ENCODE measurements at regions of chr1 and their contacts with region 1.

Region 1: GRCh38 chr1:208007938-208008342 is 97.0 kb upstream of the CD34 start:
- H3K4me3 ChIP-seq: no peak overlapping the region
- H3K27ac ChIP-seq: no peak overlapping the region
- H3K4me1 ChIP-seq: no peaks in the 10 kb centered on the region
- CTCF ChIP-seq: no peak

Region 2: DNA sequence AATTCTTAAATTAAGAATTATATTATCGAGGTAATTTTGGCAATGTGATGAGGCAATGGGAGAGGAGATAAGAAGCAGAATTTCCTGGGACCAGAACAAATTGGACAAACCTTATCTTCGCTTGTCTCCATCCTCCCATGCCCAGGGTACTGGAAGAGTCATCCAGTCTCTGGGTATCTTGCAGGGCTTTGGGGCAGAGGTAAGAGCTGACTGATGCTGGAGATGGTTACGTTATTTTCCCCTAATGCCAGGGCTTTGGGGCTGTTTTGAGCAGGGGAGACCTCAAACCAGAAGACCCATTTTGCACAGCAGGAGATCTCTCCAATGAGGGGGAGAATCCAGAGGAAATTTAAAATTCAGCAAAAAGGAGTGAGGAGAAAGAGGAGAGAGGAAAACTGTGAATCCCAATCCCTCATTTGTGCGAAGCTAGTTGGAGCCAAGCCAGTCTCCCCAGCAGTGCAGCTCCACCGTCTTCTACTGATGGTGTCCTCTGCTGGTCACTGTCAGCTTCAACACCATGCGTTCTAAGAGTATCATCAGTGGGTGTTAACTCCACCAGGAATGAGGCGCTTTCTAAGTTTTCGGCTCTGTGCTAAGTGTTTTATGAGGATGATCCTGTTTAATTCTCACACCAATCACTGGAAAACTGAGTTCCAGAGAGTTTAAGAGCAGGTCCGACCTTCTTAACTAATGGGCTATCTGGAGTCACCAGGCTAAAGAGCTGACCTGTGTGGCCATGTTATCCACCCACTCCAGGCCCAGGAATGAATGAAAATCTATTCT is 10.3 kb before region 1 on chr1:
- CTCF ChIA-PET with region 1: interaction called, 25 read pairs
- POLR2A ChIA-PET with region 1: no interaction called
- H3K4me3 ChIP-seq: no peak overlapping the region
- H3K27ac ChIP-seq: no peak overlapping the region
- H3K4me1 ChIP-seq: no peaks in the 10 kb centered on the region
- CTCF ChIP-seq: peak; percentile 65

Region 3: GRCh38 chr1:208036109-208036808 is 28.3 kb after region 1 on chr1:
- CTCF ChIA-PET with region 1: no interaction called
- POLR2A ChIA-PET with region 1: no interaction called
- H3K4me3 ChIP-seq: no peak overlapping the region
- H3K27ac ChIP-seq: no peak overlapping the region
- H3K4me1 ChIP-seq: no peaks in the 10 kb centered on the region
- CTCF ChIP-seq: no peak